ENCODE measurements at regions of chr13 and their contacts with region 1.

Region 1: DNA sequence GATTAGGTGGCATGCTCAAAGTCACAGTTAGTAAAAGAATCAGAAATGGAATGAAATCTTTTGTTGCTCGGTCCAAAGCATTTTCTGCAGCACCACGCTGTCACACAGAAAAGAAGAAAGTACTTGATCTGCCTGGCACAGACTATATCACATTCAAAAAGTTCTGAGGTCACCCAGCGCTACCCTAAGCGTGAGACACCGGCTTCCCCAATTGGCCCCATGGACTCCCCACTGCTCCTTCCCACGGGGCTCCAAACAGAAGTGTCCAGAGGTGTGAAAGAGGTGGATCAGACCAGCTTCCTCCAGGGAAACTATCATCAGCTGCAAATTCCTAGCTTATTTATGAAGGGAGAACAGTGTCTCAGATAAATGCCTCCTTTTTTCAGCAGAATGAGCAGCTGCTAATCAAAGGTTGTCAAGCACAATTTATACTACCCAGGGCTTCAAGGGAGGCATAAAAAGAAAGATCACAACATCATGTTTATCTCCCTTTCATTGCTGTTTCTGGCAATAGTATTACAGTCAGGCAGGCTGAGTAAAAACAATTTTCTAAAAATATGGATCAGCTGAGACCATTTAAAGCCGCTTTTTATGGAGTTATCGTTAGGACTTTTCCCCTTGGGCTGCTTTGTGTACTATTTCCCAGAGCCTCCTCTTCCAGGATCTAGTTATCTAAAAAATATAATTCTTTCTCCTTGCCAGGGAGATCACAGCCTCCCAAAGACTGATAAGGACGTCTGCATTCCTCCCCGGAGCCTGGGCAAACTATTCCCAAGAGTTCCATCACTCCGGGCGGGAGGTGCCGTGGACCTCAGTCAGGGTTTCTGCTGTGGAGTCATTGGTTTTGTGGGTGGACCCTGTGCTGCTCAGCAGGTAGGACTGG is 208.0 kb downstream of the LHFPL6 start:
- DNase-seq: peak; percentile 28
- ATAC-seq: peak; percentile 54 to 78

Region 2: DNA sequence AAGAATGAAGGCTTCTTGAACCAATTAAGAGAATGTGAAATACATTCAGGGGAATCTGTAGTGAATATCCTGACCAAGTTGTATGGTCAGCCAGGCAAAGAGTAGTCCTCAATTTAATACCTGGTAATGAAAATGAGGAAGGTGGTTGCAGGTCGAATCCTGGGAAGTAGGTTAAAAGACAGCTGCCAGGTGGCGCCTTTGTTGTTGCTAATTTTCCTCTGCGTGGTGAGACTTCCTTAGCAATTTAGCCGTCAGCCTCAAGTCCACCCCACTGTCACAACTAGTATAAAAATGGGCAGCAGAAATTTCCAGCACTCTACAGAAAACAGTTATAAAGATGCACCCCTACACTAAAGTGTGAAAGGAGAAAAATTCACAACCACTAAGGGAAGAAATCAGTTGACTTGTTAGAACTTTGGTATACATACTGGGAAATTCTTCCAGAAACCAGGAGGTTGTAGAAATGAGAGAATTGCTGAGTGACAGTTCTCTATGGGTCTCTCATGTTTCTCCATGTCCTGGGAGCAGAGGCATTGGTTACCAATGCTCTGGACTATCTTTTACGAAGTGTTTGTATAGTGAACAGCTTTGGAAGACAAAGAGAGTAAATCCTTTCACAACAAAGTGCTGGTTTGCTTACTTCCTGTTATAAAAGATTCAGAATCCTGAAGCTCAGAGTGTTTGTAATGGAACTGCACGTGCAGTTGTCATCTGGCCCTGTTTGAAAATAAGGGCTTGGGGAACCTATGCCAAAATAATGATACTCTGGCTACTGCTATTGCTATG is 120.9 kb before region 1 on chr13:
- intact Hi-C with region 1: loop called in 1 of 2 experiments (anchors 10 kb)
- DNase-seq: no peak
- ATAC-seq: no peak

Region 3: GRCh38 chr13:39712626-39713025 is 317.6 kb after region 1 on chr13:
- intact Hi-C with region 1: no loop called
- DNase-seq: no peak
- ATAC-seq: no peak

Measured in left cardiac atrium (tissue), 4 donors.